ENCODE measurements at regions of chr11 and their contacts with region 1.

Region 1: GRCh38 chr11:72141066-72141465 is 5.5 kb downstream of the FOLR3 start:
- DNase-seq: peak; percentile 78
- ATAC-seq: no peak; the same call in 1 of the 2 replicates
- H3K4me3 ChIP-seq: no peak overlapping the region
- H3K27ac ChIP-seq: no peak overlapping the region
- H3K4me1 ChIP-seq: peaks cover 18% of the 10 kb centered on the region; the same call in 1 of the 2 replicates
- H3K27me3 ChIP-seq: no peaks in the 10 kb centered on the region
- CTCF ChIP-seq: no peak

Region 2: GRCh38 chr11:71979602-71980001 is 161.5 kb before region 1 on chr11:
- CTCF ChIA-PET with region 1: no interaction called
- POLR2A ChIA-PET with region 1: no interaction called
- intact Hi-C with region 1: loop called (anchors 5 kb)
- DNase-seq: no peak
- ATAC-seq: no peak
- H3K4me3 ChIP-seq: no peak overlapping the region
- H3K27ac ChIP-seq: no peak overlapping the region
- H3K4me1 ChIP-seq: no peaks in the 10 kb centered on the region
- H3K27me3 ChIP-seq: no peaks in the 10 kb centered on the region
- CTCF ChIP-seq: no peak

Region 3: GRCh38 chr11:72217841-72218240 is 76.8 kb after region 1 on chr11:
- CTCF ChIA-PET with region 1: no interaction called
- POLR2A ChIA-PET with region 1: no interaction called
- intact Hi-C with region 1: no loop called
- DNase-seq: no peak
- ATAC-seq: no peak; the same call in 1 of the 2 replicates
- H3K4me3 ChIP-seq: no peak overlapping the region
- H3K27ac ChIP-seq: no peak overlapping the region
- H3K4me1 ChIP-seq: peaks cover 6% of the 10 kb centered on the region
- H3K27me3 ChIP-seq: peaks cover 32% of the 10 kb centered on the region
- CTCF ChIP-seq: no peak

Measured in PC-3 (cell line).